Activated T-helper 1 cell treated with anti-CD3 and anti-CD28 coated beads, Interleukin-12 subunit alpha, Interleukin-12 subunit beta, Interleukin-2, Interleukin-4 antibody, amounts not matched to agents 30 ng/mL and 10 ng/mL and 1 ng/mL, durations not matched to agents 14 hours and 24 hours and 36 hours (primary cell): ENCODE measurements at regions of chr14 and their contacts with region 1.

Region 1: DNA sequence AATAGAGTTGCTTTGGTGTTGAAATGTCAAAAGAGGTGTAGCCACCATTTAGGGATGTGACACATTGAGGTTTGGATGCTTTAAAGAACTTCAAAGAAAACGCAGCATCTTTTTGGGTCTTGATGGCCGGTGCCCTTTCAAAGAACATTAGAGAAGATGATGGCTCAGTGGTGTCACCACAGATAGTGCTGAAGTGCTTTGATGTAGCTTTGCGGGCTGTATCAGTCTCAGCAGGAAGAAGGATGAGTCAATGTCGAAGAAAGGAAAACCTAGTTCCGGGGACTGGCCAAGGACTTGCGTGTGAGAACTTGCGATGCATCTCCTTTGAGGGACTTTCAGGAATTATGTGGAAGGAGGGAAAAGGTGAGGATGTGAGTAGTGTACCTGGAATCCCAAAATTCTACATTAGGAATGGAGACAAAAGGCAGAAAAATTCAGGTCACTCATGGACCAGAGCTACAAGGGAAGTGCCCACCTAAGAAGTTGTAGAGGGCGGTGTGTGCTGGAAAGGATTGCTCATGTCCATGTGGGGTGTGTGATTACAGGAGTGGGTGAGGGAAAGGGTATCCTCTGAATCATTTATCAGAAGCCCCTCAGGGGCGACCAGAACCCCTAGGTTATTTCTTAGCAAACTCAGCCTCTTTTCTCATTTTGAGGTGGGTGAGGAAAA is 39.7 kb upstream of the GZMB start:
- DNase-seq: peak; percentile 74
- H3K4me3 Mint-ChIP-seq: peak overlapping the region; percentile 77
- H3K27ac Mint-ChIP-seq: peak overlapping the region; percentile 98
- H3K4me1 Mint-ChIP-seq: peaks cover 89% of the 10 kb centered on the region
- H3K27me3 Mint-ChIP-seq: no peaks in the 10 kb centered on the region

Region 2: GRCh38 chr14:24535737-24536136 is 137.9 kb before region 1 on chr14:
- intact Hi-C with region 1: loop called (anchors 5 kb)
- DNase-seq: no peak
- H3K4me3 Mint-ChIP-seq: no peak overlapping the region
- H3K27ac Mint-ChIP-seq: no peak overlapping the region
- H3K4me1 Mint-ChIP-seq: peaks cover 9% of the 10 kb centered on the region
- H3K27me3 Mint-ChIP-seq: peaks cover 3% of the 10 kb centered on the region

Region 3: GRCh38 chr14:24630872-24631477 is 42.7 kb before region 1 on chr14:
- intact Hi-C with region 1: loop called (anchors 1 kb)
- DNase-seq: no peak
- H3K4me3 Mint-ChIP-seq: peak overlapping the region; percentile 94
- H3K27ac Mint-ChIP-seq: peak overlapping the region; percentile 97
- H3K4me1 Mint-ChIP-seq: peaks cover 70% of the 10 kb centered on the region
- H3K27me3 Mint-ChIP-seq: no peaks in the 10 kb centered on the region

Region 4: GRCh38 chr14:24710403-24711112 is 36.9 kb after region 1 on chr14:
- intact Hi-C with region 1: no loop called
- DNase-seq: peak; percentile 50
- H3K4me3 Mint-ChIP-seq: no peak overlapping the region
- H3K27ac Mint-ChIP-seq: no peak overlapping the region
- H3K4me1 Mint-ChIP-seq: peaks cover 6% of the 10 kb centered on the region
- H3K27me3 Mint-ChIP-seq: peaks cover 7% of the 10 kb centered on the region

Region 5: DNA sequence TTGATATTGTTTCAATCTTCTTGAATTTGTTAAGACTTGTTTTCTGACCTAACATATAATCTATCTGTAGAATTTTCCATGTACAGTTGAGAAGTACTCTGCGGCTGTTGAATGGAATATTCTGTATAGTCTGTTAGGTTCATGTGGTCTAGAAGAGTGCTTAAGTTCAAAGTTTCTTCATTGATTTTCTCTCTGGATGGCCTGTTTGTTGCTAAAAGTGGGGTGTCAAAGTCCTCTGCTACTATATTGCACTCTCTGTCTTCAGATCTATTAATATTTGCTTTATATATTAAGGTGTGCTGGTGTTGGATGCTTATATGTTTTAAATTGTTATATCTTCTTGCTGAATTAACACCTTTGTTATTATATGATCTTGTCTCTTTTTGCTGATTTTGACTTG is 667.2 kb after region 1 on chr14:
- intact Hi-C with region 1: no loop called
- DNase-seq: no peak
- H3K4me3 Mint-ChIP-seq: no peak overlapping the region
- H3K27ac Mint-ChIP-seq: no peak overlapping the region
- H3K4me1 Mint-ChIP-seq: no peaks in the 10 kb centered on the region
- H3K27me3 Mint-ChIP-seq: peaks cover 1% of the 10 kb centered on the region

Region 6: GRCh38 chr14:26478967-26479366 is 1805.3 kb after region 1 on chr14:
- intact Hi-C with region 1: no loop called
- DNase-seq: no peak
- H3K4me3 Mint-ChIP-seq: no peak overlapping the region
- H3K27ac Mint-ChIP-seq: no peak overlapping the region
- H3K4me1 Mint-ChIP-seq: no peaks in the 10 kb centered on the region
- H3K27me3 Mint-ChIP-seq: no peaks in the 10 kb centered on the region